Calu3 (cell line): ENCODE measurements at regions of chr2 and their contacts with region 1.

Region 1: GRCh38 chr2:182077451-182078142 is 91.9 kb downstream of the PPP1R1C start:
- DNase-seq: peak; percentile 70
- H3K4me3 Mint-ChIP-seq: peak overlapping the region; percentile 36
- H3K27ac Mint-ChIP-seq: no peak overlapping the region
- H3K4me1 Mint-ChIP-seq: no peaks in the 10 kb centered on the region
- H3K27me3 Mint-ChIP-seq: no peaks in the 10 kb centered on the region
- CTCF ChIP-seq: peak; percentile 57

Region 2: GRCh38 chr2:181573140-181573736 is 504.4 kb before region 1 on chr2:
- CTCF ChIA-PET with region 1: interaction called, 4 read pairs
- intact Hi-C with region 1: loop called (anchors 2 kb)
- DNase-seq: peak; percentile 52
- H3K4me3 Mint-ChIP-seq: no peak overlapping the region
- H3K27ac Mint-ChIP-seq: no peak overlapping the region
- H3K4me1 Mint-ChIP-seq: no peaks in the 10 kb centered on the region
- H3K27me3 Mint-ChIP-seq: no peaks in the 10 kb centered on the region
- CTCF ChIP-seq: peak; percentile 52

Region 3: DNA sequence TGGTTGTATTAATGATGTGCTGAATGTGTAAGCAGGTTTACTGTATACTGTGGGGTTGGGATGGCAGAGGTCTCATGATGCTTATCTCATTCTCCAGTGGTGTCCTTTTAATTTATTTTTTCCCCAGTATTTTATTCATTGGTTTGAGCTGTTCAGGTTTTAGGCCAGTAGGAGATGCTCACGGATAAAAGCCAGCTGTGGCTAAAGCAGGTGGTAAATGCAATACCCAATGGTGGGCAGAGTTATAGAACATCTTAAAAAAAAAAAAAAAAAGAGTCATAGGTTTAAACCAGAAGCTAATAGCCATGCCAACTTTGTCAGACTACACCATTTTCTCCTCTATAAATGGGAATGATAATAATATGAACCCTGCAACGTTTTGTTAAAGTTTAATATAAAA is 339.5 kb before region 1 on chr2:
- CTCF ChIA-PET with region 1: interaction called, 7 read pairs
- intact Hi-C with region 1: loop called (anchors 1 kb)
- DNase-seq: no peak
- H3K4me3 Mint-ChIP-seq: no peak overlapping the region
- H3K27ac Mint-ChIP-seq: no peak overlapping the region
- H3K4me1 Mint-ChIP-seq: peaks cover 17% of the 10 kb centered on the region
- H3K27me3 Mint-ChIP-seq: no peaks in the 10 kb centered on the region
- CTCF ChIP-seq: peak; percentile 20

Region 4: GRCh38 chr2:181904022-181904632 is 173.5 kb before region 1 on chr2:
- CTCF ChIA-PET with region 1: interaction called, 7 read pairs
- intact Hi-C with region 1: loop called (anchors 2 kb)
- DNase-seq: no peak
- H3K4me3 Mint-ChIP-seq: peak overlapping the region; percentile 68
- H3K27ac Mint-ChIP-seq: peak overlapping the region; percentile 95
- H3K4me1 Mint-ChIP-seq: peaks cover 74% of the 10 kb centered on the region
- H3K27me3 Mint-ChIP-seq: no peaks in the 10 kb centered on the region
- CTCF ChIP-seq: peak; percentile 59

Region 5: GRCh38 chr2:181924336-181924735 is 153.3 kb before region 1 on chr2:
- CTCF ChIA-PET with region 1: interaction called, 3 read pairs
- intact Hi-C with region 1: loop called (anchors 5 kb)
- DNase-seq: no peak
- H3K4me3 Mint-ChIP-seq: peak overlapping the region; percentile 18
- H3K27ac Mint-ChIP-seq: peak overlapping the region; percentile 21
- H3K4me1 Mint-ChIP-seq: peaks cover 21% of the 10 kb centered on the region
- H3K27me3 Mint-ChIP-seq: no peaks in the 10 kb centered on the region
- CTCF ChIP-seq: no peak

Region 6: GRCh38 chr2:181953881-181954537 is 123.6 kb before region 1 on chr2:
- CTCF ChIA-PET with region 1: interaction called, 4 read pairs
- intact Hi-C with region 1: loop called (anchors 5 kb)
- DNase-seq: peak; percentile 30
- H3K4me3 Mint-ChIP-seq: peak overlapping the region; percentile 19
- H3K27ac Mint-ChIP-seq: peak overlapping the region; percentile 80
- H3K4me1 Mint-ChIP-seq: peaks cover 45% of the 10 kb centered on the region
- H3K27me3 Mint-ChIP-seq: no peaks in the 10 kb centered on the region
- CTCF ChIP-seq: no peak